Activated CD4-positive, alpha-beta T cell treated with anti-CD3 and anti-CD28 coated beads for 36 hours (primary cell): ENCODE measurements at regions of chr14 and their contacts with region 1.

Region 1: GRCh38 chr14:86462193-86462753 is 932.3 kb downstream of the FLRT2 start:
- DNase-seq: peak; percentile 5
- ATAC-seq: no peak
- H3K4me3 Mint-ChIP-seq: no peak overlapping the region
- H3K27ac Mint-ChIP-seq: no peak overlapping the region
- H3K4me1 Mint-ChIP-seq: no peaks in the 10 kb centered on the region
- H3K27me3 Mint-ChIP-seq: no peaks in the 10 kb centered on the region

Region 2: DNA sequence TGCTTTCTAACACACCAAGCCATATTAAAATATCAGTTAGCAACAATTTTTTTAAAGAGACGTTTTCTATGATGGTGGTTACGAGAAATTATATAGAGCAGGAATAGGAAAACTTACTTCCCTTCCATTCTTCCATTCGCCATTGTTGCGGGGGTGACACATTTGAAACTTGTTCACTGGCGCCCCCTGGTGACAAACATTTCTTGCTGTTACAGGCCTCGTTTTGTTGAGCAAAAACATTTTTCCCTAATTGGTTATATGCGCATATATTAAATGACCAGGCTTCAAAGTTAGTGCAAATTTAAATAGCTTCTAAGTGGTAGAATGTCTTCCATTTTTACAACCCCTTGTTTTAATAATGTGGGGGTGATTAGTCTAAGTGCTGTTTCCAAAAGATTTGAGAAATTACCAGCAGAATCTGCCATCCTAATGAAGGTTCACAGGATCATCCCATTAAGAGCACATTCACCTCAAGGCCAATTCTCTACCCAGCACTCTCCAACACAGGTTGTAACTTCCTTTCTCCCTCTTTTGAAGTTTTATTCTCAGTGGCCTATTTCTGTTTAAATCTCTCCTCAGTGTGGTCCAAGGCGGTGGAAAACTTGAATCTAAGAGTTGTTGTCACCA is 192.4 kb after region 1 on chr14:
- CTCF ChIA-PET with region 1: no interaction called
- POLR2A ChIA-PET with region 1: no interaction called
- intact Hi-C with region 1: loop called in 1 of 2 experiments (anchors 5 kb)
- DNase-seq: peak; percentile 69
- ATAC-seq: no peak
- H3K4me3 Mint-ChIP-seq: no peak overlapping the region
- H3K27ac Mint-ChIP-seq: no peak overlapping the region
- H3K4me1 Mint-ChIP-seq: no peaks in the 10 kb centered on the region
- H3K27me3 Mint-ChIP-seq: no peaks in the 10 kb centered on the region

Region 3: DNA sequence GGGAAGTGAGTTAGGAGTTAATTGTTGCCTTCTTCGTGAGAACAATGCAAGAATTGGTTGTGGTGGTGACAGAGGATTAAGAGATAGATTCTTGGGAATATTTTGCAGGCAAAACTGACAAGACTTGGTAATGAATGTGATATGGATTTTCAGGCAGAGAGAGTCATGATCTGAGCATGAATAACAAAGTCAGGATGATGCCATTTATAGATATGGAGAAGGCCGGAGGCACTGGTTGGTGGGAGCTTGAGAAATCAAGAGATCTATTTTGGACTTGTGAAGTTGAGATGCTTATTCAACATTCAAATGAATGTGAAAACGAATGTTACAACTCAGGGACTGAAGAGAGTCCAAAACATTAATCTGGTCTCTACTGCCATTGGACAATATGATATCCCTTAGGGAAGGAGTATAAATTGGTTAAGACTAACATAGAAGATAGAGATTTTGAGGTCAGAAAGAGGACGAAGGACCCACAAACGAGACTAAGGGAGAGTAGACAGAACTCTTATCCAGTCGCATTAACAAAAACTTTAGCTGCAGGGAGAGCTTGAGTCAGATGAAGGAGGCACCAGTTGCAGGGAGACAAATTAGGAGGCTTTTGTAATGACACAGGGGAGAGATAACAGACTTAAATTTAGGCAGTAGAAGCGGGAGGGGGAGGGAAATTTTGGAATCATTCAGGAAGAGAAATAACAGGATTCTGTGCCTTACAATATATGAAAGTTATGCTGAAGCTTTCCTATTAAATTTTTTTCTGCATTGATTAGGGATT is 440.1 kb after region 1 on chr14:
- CTCF ChIA-PET with region 1: no interaction called
- POLR2A ChIA-PET with region 1: no interaction called
- intact Hi-C with region 1: loop called in 1 of 2 experiments (anchors 5 kb)
- DNase-seq: no peak
- ATAC-seq: no peak
- H3K4me3 Mint-ChIP-seq: no peak overlapping the region
- H3K27ac Mint-ChIP-seq: no peak overlapping the region
- H3K4me1 Mint-ChIP-seq: no peaks in the 10 kb centered on the region
- H3K27me3 Mint-ChIP-seq: no peaks in the 10 kb centered on the region